Motor neuron (in vitro differentiated cells): ENCODE measurements at regions of chr17 and their contacts with region 1.

Region 1: GRCh38 chr17:63434876-63435684 is 11.0 kb downstream of the CYB561 start:
- ATAC-seq: no peak
- H3K4me3 ChIP-seq: no peak overlapping the region
- H3K27ac ChIP-seq: no peak overlapping the region
- H3K4me1 ChIP-seq: no peaks in the 10 kb centered on the region

Region 2: GRCh38 chr17:63480826-63481487 is 45.9 kb after region 1 on chr17:
- in situ Hi-C with region 1: no loop called
- ATAC-seq: no peak
- H3K4me3 ChIP-seq: no peak overlapping the region
- H3K27ac ChIP-seq: no peak overlapping the region
- H3K4me1 ChIP-seq: peaks cover 9 to 10% of the 10 kb centered on the region in 2 donors

Region 3: GRCh38 chr17:63611354-63611753 is 176.3 kb after region 1 on chr17:
- in situ Hi-C with region 1: loop called in 5 of 9 experiments (anchors 10 to 25 kb)
- ATAC-seq: no peak
- H3K4me3 ChIP-seq: no peak overlapping the region
- H3K27ac ChIP-seq: no peak overlapping the region
- H3K4me1 ChIP-seq: no peaks in the 10 kb centered on the region